ENCODE measurements at regions of chr12 and their contacts with region 1.

Region 1: GRCh38 chr12:69290545-69291277 is 51.3 kb downstream of the CPSF6 start:
- DNase-seq: peak; percentile 84
- ATAC-seq: peak; percentile 100
- H3K4me3 ChIP-seq: no peak overlapping the region
- H3K4me3 Mint-ChIP-seq: no peak overlapping the region
- H3K27ac ChIP-seq: no peak overlapping the region
- H3K27ac Mint-ChIP-seq: no peak overlapping the region
- H3K4me1 ChIP-seq: peaks cover 0 to 4% of the 10 kb centered on the region in 2 donors
- H3K4me1 Mint-ChIP-seq: peaks cover 4% of the 10 kb centered on the region
- H3K27me3 ChIP-seq: peaks cover 0 to 23% (median 13%) of the 10 kb centered on the region in 4 experiments
- H3K27me3 Mint-ChIP-seq: peaks cover 37% of the 10 kb centered on the region
- CTCF ChIP-seq: peak; percentile 96

Region 2: DNA sequence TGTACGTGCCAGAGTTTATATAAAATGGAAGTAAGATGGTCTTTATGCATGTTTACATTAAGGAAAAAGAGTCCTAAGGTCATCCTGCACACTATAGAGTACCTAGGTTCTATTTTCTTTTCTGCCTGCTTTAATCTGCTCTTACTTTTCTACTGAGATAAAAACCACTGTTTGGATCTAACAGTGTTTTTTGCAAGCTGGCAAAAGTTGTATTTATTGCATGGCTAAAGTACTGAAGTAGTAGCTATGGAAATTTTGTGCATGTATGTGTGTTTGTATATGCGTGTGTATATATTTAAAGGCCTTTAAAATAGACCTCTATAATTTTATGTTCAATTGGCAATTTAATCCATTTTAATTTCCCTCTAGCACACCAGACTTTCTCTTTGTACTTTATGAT is 149.6 kb before region 1 on chr12:
- CTCF ChIA-PET with region 1: no interaction called
- POLR2A ChIA-PET with region 1: no interaction called
- intact Hi-C with region 1: no loop called
- DNase-seq: no peak
- ATAC-seq: no peak
- H3K4me3 ChIP-seq: no peak overlapping the region
- H3K4me3 Mint-ChIP-seq: no peak overlapping the region
- H3K27ac ChIP-seq: no peak overlapping the region
- H3K27ac Mint-ChIP-seq: no peak overlapping the region
- H3K4me1 ChIP-seq: no peaks in the 10 kb centered on the region
- H3K4me1 Mint-ChIP-seq: no peaks in the 10 kb centered on the region
- H3K27me3 ChIP-seq: no peaks in the 10 kb centered on the region
- H3K27me3 Mint-ChIP-seq: peaks cover 9% of the 10 kb centered on the region
- CTCF ChIP-seq: no peak

Region 3: GRCh38 chr12:69274861-69275260 is 15.8 kb before region 1 on chr12:
- CTCF ChIA-PET with region 1: no interaction called
- POLR2A ChIA-PET with region 1: no interaction called
- intact Hi-C with region 1: no loop called
- DNase-seq: no peak
- ATAC-seq: no peak
- H3K4me3 ChIP-seq: no peak overlapping the region
- H3K4me3 Mint-ChIP-seq: no peak overlapping the region
- H3K27ac ChIP-seq: no peak overlapping the region
- H3K27ac Mint-ChIP-seq: no peak overlapping the region
- H3K4me1 ChIP-seq: no peaks in the 10 kb centered on the region
- H3K4me1 Mint-ChIP-seq: peaks cover 4% of the 10 kb centered on the region
- H3K27me3 ChIP-seq: no peaks in the 10 kb centered on the region
- H3K27me3 Mint-ChIP-seq: no peaks in the 10 kb centered on the region
- CTCF ChIP-seq: no peak

Region 4: GRCh38 chr12:69341328-69341727 is 50.6 kb after region 1 on chr12:
- CTCF ChIA-PET with region 1: interaction called, 4 read pairs
- POLR2A ChIA-PET with region 1: no interaction called
- intact Hi-C with region 1: loop called (anchors 5 kb)
- DNase-seq: no peak
- ATAC-seq: no peak
- H3K4me3 ChIP-seq: no peak overlapping the region
- H3K4me3 Mint-ChIP-seq: no peak overlapping the region
- H3K27ac ChIP-seq: no peak overlapping the region
- H3K27ac Mint-ChIP-seq: no peak overlapping the region
- H3K4me1 ChIP-seq: peaks cover 17 to 18% of the 10 kb centered on the region in 2 donors
- H3K4me1 Mint-ChIP-seq: peaks cover 18% of the 10 kb centered on the region
- H3K27me3 ChIP-seq: peaks cover 0 to 7% (median 0%) of the 10 kb centered on the region in 4 experiments
- H3K27me3 Mint-ChIP-seq: no peaks in the 10 kb centered on the region
- CTCF ChIP-seq: no peak

Region 5: DNA sequence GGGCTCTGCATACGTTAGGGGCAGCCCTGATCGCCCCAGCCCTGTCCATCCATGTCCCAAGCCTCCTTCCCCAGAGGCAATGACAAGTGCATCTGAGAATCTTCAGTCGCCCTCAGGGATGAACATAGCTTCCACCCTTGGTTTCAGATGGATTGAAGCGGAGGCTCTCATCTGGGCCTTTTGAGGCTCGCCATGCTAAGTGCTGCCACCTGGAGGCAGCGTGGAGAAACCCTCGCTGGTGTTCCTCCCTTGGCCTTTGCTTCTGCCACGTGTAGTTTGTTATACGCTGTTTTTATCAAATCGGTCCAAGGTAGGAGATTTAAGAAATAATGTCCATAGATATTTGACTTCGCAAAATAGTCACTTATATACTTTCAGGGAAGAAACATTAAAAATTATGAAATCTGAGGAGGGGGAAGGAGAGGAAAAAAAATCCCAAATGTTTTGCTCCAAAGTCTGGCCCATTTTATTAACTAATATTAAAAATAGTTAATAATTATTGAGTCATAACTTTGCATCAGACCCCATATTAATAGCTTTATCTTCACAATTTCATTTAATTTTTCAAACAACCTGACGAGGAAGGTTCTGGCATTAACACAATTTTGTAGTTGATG is 348.8 kb after region 1 on chr12:
- CTCF ChIA-PET with region 1: interaction called, 33 read pairs
- POLR2A ChIA-PET with region 1: no interaction called
- intact Hi-C with region 1: loop called (anchors 1 kb)
- DNase-seq: peak; percentile 69
- ATAC-seq: peak; percentile 67
- H3K4me3 ChIP-seq: no peak overlapping the region
- H3K4me3 Mint-ChIP-seq: no peak overlapping the region
- H3K27ac ChIP-seq: no peak overlapping the region
- H3K27ac Mint-ChIP-seq: no peak overlapping the region
- H3K4me1 ChIP-seq: no peaks in the 10 kb centered on the region
- H3K4me1 Mint-ChIP-seq: no peaks in the 10 kb centered on the region
- H3K27me3 ChIP-seq: no peaks in the 10 kb centered on the region
- H3K27me3 Mint-ChIP-seq: no peaks in the 10 kb centered on the region
- CTCF ChIP-seq: peak; percentile 91

Region 6: GRCh38 chr12:70576346-70577282 is 1285.9 kb after region 1 on chr12:
- CTCF ChIA-PET with region 1: no interaction called
- POLR2A ChIA-PET with region 1: no interaction called
- intact Hi-C with region 1: loop called (anchors 5 kb)
- DNase-seq: peak; percentile 66
- ATAC-seq: peak; percentile 43
- H3K4me3 ChIP-seq: no peak overlapping the region
- H3K4me3 Mint-ChIP-seq: no peak overlapping the region
- H3K27ac ChIP-seq: no peak overlapping the region
- H3K27ac Mint-ChIP-seq: no peak overlapping the region
- H3K4me1 ChIP-seq: no peaks in the 10 kb centered on the region
- H3K4me1 Mint-ChIP-seq: no peaks in the 10 kb centered on the region
- H3K27me3 ChIP-seq: peaks cover 0 to 2% (median 0%) of the 10 kb centered on the region in 4 experiments
- H3K27me3 Mint-ChIP-seq: peaks cover 4% of the 10 kb centered on the region
- CTCF ChIP-seq: peak; percentile 78